Activated naive CD4-positive, alpha-beta T cell treated with anti-CD3 and anti-CD28 coated beads, Interleukin-2, amount 10 ng/mL, durations not matched to agents 7 days and 5 days (primary cell): ENCODE measurements at regions of chr4 and their contacts with region 1.

Region 1: GRCh38 chr4:39029752-39030694 is 2.2 kb downstream of the TMEM156 start:
- DNase-seq: peak; percentile 45
- H3K4me3 Mint-ChIP-seq: peak overlapping the region; percentile 74
- H3K27ac Mint-ChIP-seq: peak overlapping the region; percentile 97
- H3K4me1 Mint-ChIP-seq: peaks cover 60% of the 10 kb centered on the region
- H3K27me3 Mint-ChIP-seq: no peaks in the 10 kb centered on the region

Region 2: GRCh38 chr4:38768968-38769394 is 261.0 kb before region 1 on chr4:
- CTCF ChIA-PET with region 1: no interaction called
- DNase-seq: no peak
- H3K4me3 Mint-ChIP-seq: no peak overlapping the region
- H3K27ac Mint-ChIP-seq: no peak overlapping the region
- H3K4me1 Mint-ChIP-seq: peaks cover 4% of the 10 kb centered on the region
- H3K27me3 Mint-ChIP-seq: peaks cover 12% of the 10 kb centered on the region

Region 3: DNA sequence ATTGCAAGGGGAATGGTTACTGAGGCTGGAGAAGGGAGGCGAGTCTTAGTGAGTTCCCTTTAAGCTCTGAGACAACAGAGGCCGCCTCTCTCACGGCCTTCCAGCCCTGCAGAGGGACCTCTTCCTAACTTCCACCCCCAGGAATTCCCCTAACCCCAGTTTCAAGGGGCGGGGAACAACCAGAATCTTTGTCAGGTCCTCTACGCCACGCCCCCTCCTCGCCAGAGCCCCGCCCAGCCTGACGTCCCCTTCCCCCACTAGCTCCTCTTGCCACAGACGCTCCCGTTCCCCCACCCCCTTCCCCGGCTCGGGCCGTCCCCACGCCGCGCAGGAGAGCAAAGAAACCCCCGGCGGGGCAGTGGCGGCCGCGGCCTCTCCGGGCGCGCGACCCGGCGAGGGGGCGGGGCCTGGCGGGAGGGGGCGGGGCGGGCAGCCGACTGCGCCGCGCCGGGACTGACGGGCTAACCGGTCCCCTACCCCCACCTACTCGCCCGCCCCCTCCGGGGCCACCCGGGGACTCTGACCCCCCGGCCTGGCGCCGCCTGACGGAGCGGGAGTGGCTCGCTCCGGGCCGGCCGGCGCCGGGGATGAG is 14.4 kb after region 1 on chr4:
- CTCF ChIA-PET with region 1: interaction called, 12 read pairs
- DNase-seq: peak; percentile 98
- H3K4me3 Mint-ChIP-seq: peak overlapping the region; percentile 86
- H3K27ac Mint-ChIP-seq: peak overlapping the region; percentile 91
- H3K4me1 Mint-ChIP-seq: peaks cover 56% of the 10 kb centered on the region
- H3K27me3 Mint-ChIP-seq: no peaks in the 10 kb centered on the region

Region 4: DNA sequence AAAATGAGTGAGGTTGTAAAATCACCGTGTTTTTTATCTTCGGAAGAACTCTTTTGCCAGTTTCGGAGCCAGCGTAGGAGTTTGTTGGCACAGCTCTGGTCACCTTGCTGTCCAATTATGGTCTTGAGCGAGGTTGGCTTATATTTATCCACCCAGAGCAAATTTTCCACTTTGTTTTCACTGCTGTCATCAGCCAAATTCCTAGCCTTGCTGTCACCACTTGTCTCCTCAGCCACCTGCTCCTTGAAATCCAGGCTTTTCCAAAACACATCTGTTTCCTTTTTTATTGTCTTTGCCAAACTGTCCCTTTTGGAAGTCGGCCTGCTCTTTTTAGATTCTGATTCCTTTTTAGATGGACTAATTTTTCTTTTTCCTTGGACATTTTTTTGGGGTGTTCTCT is 278.6 kb after region 1 on chr4:
- CTCF ChIA-PET with region 1: no interaction called
- DNase-seq: no peak
- H3K4me3 Mint-ChIP-seq: no peak overlapping the region
- H3K27ac Mint-ChIP-seq: peak overlapping the region; percentile 62
- H3K4me1 Mint-ChIP-seq: peaks cover 11% of the 10 kb centered on the region
- H3K27me3 Mint-ChIP-seq: no peaks in the 10 kb centered on the region